CD8-positive, alpha-beta T cell (primary cell): ENCODE measurements at regions of chr10 and their contacts with region 1.

Region 1: GRCh38 chr10:102394079-102394800 is 1.3 kb upstream of the NFKB2 start:
- DNase-seq: peak; percentile 95 to 99 (median 98)
- ATAC-seq: peak; percentile 74
- H3K4me3 ChIP-seq: peak overlapping the region; percentile 89 to 95
- H3K4me3 Mint-ChIP-seq: peak overlapping the region; percentile 90
- H3K27ac ChIP-seq: peak overlapping the region; percentile 99 to 100
- H3K27ac Mint-ChIP-seq: peak overlapping the region; percentile 98
- H3K4me1 ChIP-seq: peaks cover 24% of the 10 kb centered on the region
- H3K4me1 Mint-ChIP-seq: peaks cover 37% of the 10 kb centered on the region
- H3K27me3 ChIP-seq: no peaks in the 10 kb centered on the region
- H3K27me3 Mint-ChIP-seq: no peaks in the 10 kb centered on the region
- CTCF ChIP-seq: no peak

Region 2: GRCh38 chr10:102245101-102245931 is 148.9 kb before region 1 on chr10 and contains the start of gene GBF1:
- CTCF ChIA-PET with region 1: interaction called, 4 read pairs
- POLR2A ChIA-PET with region 1: interaction called, 10 read pairs
- intact Hi-C with region 1: loop called in 1 of 2 experiments (anchors 1 kb)
- DNase-seq: peak; percentile 75 to 98 (median 87)
- ATAC-seq: peak; percentile 84
- H3K4me3 ChIP-seq: peak within 1 kb of the TSS; percentile 82 to 95
- H3K4me3 Mint-ChIP-seq: peak within 1 kb of the TSS; percentile 94
- H3K27ac ChIP-seq: peak within 1 kb of the TSS; percentile 89 to 93
- H3K27ac Mint-ChIP-seq: peak within 1 kb of the TSS; percentile 92
- H3K4me1 ChIP-seq: peaks cover 44% of the 10 kb centered on the region
- H3K4me1 Mint-ChIP-seq: peaks cover 54% of the 10 kb centered on the region
- H3K27me3 ChIP-seq: peaks cover 10 to 22% of the 10 kb centered on the region in 2 experiments
- H3K27me3 Mint-ChIP-seq: peaks cover 19% of the 10 kb centered on the region
- CTCF ChIP-seq: no peak
- total RNA-seq, gene GBF1: 26.7 to 31.3 TPM

Region 3: DNA sequence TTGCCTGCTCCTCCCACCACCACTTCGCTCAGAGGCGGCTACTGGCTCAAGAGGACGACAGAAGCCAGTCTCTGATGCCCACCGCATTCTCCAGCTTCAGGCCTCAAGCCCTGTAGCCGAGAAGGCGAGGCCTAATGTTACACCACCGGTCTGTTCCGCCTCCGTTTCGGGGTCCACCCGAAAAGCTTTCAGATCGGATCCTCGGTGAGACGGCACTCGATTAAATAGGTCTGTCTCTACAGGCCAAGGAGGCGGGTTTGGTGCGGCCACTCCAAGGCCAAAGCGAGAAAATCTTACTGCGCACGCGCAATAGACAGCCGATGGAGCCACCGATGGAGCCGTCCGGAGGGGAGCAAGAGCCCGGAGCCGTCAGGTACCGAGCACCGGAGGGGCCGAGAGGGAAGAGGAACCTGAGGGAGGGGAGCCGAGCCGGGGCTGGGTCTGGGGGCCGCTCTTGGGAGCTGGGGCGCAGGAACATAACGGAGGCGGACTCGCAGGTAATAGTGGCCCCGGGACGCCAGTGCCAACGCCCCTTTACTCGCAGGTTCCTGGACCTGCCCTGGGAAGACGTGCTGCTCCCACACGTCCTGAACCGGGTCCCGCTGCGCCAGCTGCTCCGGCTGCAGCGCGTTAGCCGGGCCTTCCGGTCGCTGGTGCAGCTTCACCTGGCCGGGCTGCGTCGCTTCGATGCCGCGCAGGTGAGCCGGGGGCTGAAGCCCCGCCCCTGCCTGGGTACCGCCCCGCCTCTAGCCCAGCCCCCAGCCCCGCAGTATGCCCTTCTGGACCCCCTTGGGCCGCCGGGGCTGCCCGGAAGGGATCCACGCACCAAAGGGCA is 26.8 kb after region 1 on chr10 and contains the start of gene FBXL15:
- CTCF ChIA-PET with region 1: interaction called, 45 read pairs
- POLR2A ChIA-PET with region 1: interaction called, 17 read pairs
- intact Hi-C with region 1: loop called (anchors 1 kb)
- DNase-seq: peak; percentile 86 to 98 (median 95)
- ATAC-seq: peak; percentile 70
- H3K4me3 ChIP-seq: peak within 1 kb of the TSS; percentile 75 to 81
- H3K4me3 Mint-ChIP-seq: peak within 1 kb of the TSS; percentile 95
- H3K27ac ChIP-seq: peak within 1 kb of the TSS; percentile 79 to 82
- H3K27ac Mint-ChIP-seq: peak within 1 kb of the TSS; percentile 91
- H3K4me1 ChIP-seq: peaks cover 36% of the 10 kb centered on the region
- H3K4me1 Mint-ChIP-seq: peaks cover 39% of the 10 kb centered on the region
- H3K27me3 ChIP-seq: peaks cover 6 to 17% of the 10 kb centered on the region in 2 experiments
- H3K27me3 Mint-ChIP-seq: peaks cover 15% of the 10 kb centered on the region
- CTCF ChIP-seq: no peak
- total RNA-seq, gene FBXL15: 7.0 to 7.9 TPM

Region 4: GRCh38 chr10:102450194-102450938 is 56.1 kb after region 1 on chr10:
- CTCF ChIA-PET with region 1: interaction called, 11 read pairs
- POLR2A ChIA-PET with region 1: interaction called, 34 read pairs
- intact Hi-C with region 1: loop called (anchors 1 kb)
- DNase-seq: peak; percentile 78 to 98 (median 89)
- ATAC-seq: peak; percentile 77
- H3K4me3 ChIP-seq: peak overlapping the region; percentile 73 to 92
- H3K4me3 Mint-ChIP-seq: peak overlapping the region; percentile 92
- H3K27ac ChIP-seq: peak overlapping the region; percentile 76 to 88
- H3K27ac Mint-ChIP-seq: peak overlapping the region; percentile 94
- H3K4me1 ChIP-seq: peaks cover 16% of the 10 kb centered on the region
- H3K4me1 Mint-ChIP-seq: peaks cover 23% of the 10 kb centered on the region
- H3K27me3 ChIP-seq: no peaks in the 10 kb centered on the region
- H3K27me3 Mint-ChIP-seq: no peaks in the 10 kb centered on the region
- CTCF ChIP-seq: no peak

Region 5: DNA sequence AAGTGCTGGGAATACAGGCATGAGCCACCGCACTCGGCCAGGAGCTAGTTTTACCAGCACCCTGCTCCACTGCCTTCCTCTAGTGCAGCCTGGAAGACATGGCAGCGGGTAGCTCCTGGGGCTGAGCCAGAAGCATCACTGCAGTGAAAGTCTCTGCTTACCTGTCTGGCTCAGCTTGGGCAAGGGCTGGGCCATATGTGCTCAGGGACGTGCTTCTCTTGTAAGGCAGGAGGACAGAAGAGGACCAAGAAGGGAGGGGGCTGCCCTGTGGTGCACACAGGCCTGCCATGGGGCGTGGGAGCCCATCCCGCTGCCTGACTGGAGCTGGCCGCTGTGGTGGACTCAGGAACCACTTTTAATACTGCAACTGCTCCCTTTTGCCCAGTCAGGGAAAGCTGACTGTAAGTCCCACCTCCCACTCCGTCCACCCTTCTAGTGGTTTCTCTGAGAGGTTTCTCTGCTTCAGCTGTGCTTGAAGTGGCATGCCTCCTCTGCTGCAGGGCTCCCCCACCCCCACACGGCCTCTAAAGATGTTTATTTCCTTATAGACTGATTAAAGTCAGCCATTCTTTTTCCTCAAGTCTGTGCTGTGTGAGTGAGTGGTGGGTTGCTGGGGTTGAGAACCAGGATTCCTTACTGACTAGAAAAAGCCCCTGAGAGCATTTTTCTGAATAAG is 82.4 kb after region 1 on chr10:
- CTCF ChIA-PET with region 1: interaction called, 100 read pairs
- POLR2A ChIA-PET with region 1: interaction called, 7 read pairs
- intact Hi-C with region 1: loop called (anchors 1 kb)
- DNase-seq: peak in 5 of 9 experiments; percentile 13 to 60 (median 24)
- ATAC-seq: no peak
- H3K4me3 ChIP-seq: no peak overlapping the region
- H3K4me3 Mint-ChIP-seq: peak overlapping the region; percentile 29
- H3K27ac ChIP-seq: peak overlapping the region in 1 of 2 experiments; percentile 43
- H3K27ac Mint-ChIP-seq: peak overlapping the region; percentile 79
- H3K4me1 ChIP-seq: peaks cover 36% of the 10 kb centered on the region
- H3K4me1 Mint-ChIP-seq: peaks cover 43% of the 10 kb centered on the region
- H3K27me3 ChIP-seq: no peaks in the 10 kb centered on the region
- H3K27me3 Mint-ChIP-seq: no peaks in the 10 kb centered on the region
- CTCF ChIP-seq: no peak

Region 6: DNA sequence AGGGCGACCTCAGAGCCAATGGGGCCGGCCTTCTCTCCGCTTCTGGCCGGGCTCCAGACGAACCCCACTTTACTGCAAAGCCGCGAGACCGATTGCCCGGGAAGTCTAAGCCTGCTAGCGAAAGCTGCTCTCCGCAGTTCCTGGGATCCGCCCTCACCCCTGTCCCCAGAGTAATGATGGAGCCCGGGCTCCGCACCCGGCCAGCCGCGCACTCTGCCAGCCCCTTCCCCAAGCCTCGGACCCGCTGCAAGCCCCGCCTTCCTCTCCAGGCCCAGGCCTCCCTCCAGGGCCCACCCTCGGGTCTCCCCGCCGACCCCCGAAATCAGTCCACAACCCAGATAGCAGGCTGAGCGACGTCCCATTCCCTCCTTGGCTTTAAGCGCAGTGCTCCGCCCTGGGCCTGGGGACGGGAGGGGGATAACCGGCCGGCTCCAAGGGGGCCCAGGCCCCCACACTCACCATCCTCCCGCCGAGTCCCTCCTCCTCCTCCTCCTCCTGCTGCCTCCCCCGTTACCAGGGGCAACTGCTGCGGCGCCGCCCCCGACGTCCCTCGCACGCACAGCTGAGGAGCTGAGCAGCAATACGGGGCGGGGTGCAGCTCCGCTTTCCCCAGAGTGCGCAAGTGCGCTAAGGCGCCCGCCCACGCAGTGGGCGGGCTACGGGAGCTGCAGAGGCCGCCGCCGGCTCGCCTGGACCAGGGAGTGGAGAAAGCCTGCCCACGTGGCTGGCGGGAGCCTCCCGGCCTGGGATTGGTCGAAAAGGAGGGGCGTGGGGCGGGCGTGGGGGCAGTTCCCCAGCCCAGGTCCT is 319.8 kb after region 1 on chr10 and contains the start of gene ARL3:
- CTCF ChIA-PET with region 1: no interaction called
- POLR2A ChIA-PET with region 1: interaction called, 3 read pairs
- intact Hi-C with region 1: loop called in 1 of 2 experiments (anchors 2 kb)
- DNase-seq: peak; percentile 79 to 98 (median 94)
- ATAC-seq: peak; percentile 89
- H3K4me3 ChIP-seq: peak within 1 kb of the TSS; percentile 96 to 98
- H3K4me3 Mint-ChIP-seq: peak within 1 kb of the TSS; percentile 97
- H3K27ac ChIP-seq: peak within 1 kb of the TSS; percentile 84 to 91
- H3K27ac Mint-ChIP-seq: peak within 1 kb of the TSS; percentile 94
- H3K4me1 ChIP-seq: peaks cover 21% of the 10 kb centered on the region
- H3K4me1 Mint-ChIP-seq: peaks cover 59% of the 10 kb centered on the region
- H3K27me3 ChIP-seq: no peaks in the 10 kb centered on the region
- H3K27me3 Mint-ChIP-seq: no peaks in the 10 kb centered on the region
- CTCF ChIP-seq: peak; percentile 65
- total RNA-seq, gene ARL3: 0.49 to 0.75 TPM